Psoas muscle (tissue), 8 donors: ENCODE measurements at regions of chr6 and their contacts with region 1.

Region 1: GRCh38 chr6:75504465-75505228 is 11.0 kb upstream of the FILIP1 start:
- DNase-seq: no peak
- ATAC-seq: peak; percentile 79 to 97 (median 94)
- H3K4me3 ChIP-seq: no peak overlapping the region
- H3K27ac ChIP-seq: no peak overlapping the region
- H3K4me1 ChIP-seq: no peaks in the 10 kb centered on the region
- H3K27me3 ChIP-seq: no peaks in the 10 kb centered on the region
- CTCF ChIP-seq: peak; percentile 55

Region 2: DNA sequence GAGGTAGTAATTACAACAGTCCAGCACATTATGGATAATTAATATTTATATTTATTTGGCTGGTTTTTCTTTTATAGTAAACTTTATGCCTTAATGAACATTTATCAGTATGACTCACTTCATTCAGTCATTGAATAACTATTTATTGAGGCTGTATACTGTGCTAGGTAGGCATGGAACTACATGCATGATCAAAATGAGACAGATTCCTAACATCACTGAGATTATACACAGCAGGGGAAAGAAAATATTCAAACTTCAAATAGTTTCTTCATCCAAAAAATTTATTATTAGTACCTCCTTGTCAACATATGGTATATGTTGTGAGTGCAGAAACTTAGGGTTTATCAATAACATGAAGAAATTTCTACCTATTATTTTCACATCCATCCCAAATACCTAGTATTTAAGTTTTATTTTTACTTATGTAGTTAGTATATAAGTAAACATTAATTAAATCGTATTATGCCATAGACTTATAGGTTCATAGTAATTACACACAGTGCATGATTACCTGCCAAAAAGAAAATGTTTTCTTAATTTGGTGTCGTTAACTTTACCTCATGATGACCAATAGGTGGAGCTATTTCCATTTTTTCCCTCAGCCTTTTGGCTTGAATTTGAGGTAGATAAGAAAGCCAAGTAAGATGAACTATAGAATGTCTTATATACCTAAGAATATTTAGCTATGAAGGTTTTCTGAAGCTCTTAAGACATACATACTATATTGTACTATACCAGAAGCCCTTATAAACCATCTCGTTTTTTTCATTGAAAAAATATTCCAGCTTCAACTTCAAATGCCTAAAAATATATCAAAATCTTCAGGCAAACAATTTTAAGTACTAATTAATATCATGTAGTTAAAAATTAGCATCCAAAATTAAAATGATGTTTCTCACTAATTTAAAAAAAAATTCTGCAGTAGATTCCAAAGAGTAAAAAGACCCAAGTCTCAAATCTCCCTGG is 207.6 kb before region 1 on chr6:
- intact Hi-C with region 1: loop called (anchors 5 kb)
- DNase-seq: no peak
- ATAC-seq: peak in 3 of 4 donors; percentile 39 to 65 (median 54)
- H3K4me3 ChIP-seq: no peak overlapping the region
- H3K27ac ChIP-seq: no peak overlapping the region
- H3K4me1 ChIP-seq: peaks cover 18% of the 10 kb centered on the region
- H3K27me3 ChIP-seq: no peaks in the 10 kb centered on the region
- CTCF ChIP-seq: peak; percentile 76

Region 3: DNA sequence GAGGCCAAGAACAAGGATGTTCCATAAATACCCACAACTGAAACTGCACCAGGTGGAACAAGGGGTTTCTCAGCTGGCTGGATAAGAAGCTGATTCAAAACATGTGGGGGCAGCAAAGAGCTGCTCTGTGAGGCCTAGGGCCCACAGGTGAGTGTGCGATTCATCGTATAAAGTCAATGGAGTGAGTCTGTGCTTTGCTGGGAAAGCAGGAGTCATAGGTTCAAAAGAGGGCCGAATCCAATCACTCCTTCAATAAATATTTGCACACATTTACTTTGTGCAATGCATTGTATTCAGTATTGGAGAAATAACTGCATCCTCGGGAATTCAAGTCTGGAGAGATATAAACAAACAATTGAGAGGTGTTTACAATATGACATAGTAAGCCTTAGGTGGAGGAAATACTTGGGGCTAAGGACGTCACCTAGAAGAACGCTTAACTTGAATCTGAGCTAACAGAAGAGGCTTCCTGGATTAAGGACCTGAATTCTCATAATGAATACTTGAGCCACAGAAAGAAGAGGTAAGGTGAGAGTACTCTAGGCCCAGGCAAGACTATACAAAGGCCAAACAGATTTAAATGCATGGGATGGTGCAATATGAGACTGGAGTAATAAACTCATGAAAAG is 136.4 kb before region 1 on chr6:
- intact Hi-C with region 1: loop called (anchors 5 kb)
- DNase-seq: no peak
- ATAC-seq: peak; percentile 89 to 92 (median 90)
- H3K4me3 ChIP-seq: no peak overlapping the region
- H3K27ac ChIP-seq: peak overlapping the region; percentile 73
- H3K4me1 ChIP-seq: peaks cover 41% of the 10 kb centered on the region
- H3K27me3 ChIP-seq: no peaks in the 10 kb centered on the region
- CTCF ChIP-seq: peak; percentile 73